Activated CD4-positive, alpha-beta memory T cell treated with anti-CD3 and anti-CD28 coated beads for 36 hours (primary cell): ENCODE measurements at regions of chr10 and their contacts with region 1.

Region 1: GRCh38 chr10:80372675-80373074 is 16.1 kb downstream of the DYDC2 start:
- DNase-seq: no peak
- H3K4me3 Mint-ChIP-seq: no peak overlapping the region
- H3K27ac Mint-ChIP-seq: no peak overlapping the region
- H3K4me1 Mint-ChIP-seq: no peaks in the 10 kb centered on the region
- H3K27me3 Mint-ChIP-seq: peaks cover 2% of the 10 kb centered on the region

Region 2: DNA sequence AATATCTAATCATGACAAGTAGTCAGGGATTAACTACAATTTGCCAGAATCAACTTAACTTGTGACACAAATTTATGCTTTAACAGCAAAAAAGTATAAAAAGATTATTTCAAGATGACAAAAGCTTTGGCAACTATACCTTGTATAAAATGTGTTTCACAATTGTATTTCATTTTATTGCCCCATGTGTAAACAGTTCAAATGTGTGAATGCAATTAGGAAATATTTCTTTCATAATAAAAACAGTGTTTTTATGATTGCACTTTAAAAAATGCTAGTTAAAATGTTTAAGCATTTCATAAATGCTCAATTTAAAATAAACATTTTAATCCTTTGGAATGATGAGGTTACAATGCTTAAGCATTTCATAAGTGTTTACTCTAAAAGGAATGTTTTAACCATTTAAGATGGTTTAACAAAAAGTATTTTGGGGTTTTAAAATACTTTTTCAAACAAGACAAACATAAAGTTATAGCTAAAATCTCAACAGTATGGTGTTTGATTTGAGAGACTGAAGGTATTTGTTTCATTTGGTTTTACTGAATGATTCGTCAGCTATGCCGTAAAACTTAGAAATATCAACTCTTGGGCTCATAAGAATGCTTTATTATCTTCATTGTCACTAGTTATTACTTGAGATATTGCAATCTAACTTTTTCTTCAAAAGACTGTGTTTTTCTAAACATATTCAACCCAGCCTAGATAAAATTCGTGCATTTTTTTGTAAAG is 473.9 kb before region 1 on chr10:
- CTCF ChIA-PET with region 1: no interaction called
- POLR2A ChIA-PET with region 1: no interaction called
- intact Hi-C with region 1: no loop called
- DNase-seq: no peak
- H3K4me3 Mint-ChIP-seq: no peak overlapping the region
- H3K27ac Mint-ChIP-seq: no peak overlapping the region
- H3K4me1 Mint-ChIP-seq: peaks cover under 1% of the 10 kb centered on the region
- H3K27me3 Mint-ChIP-seq: peaks cover 25% of the 10 kb centered on the region

Region 3: GRCh38 chr10:80158598-80159127 is 214.0 kb before region 1 on chr10:
- CTCF ChIA-PET with region 1: no interaction called
- POLR2A ChIA-PET with region 1: no interaction called
- intact Hi-C with region 1: no loop called
- DNase-seq: no peak
- H3K4me3 Mint-ChIP-seq: no peak overlapping the region
- H3K27ac Mint-ChIP-seq: peak overlapping the region; percentile 7
- H3K4me1 Mint-ChIP-seq: peaks cover 11% of the 10 kb centered on the region
- H3K27me3 Mint-ChIP-seq: no peaks in the 10 kb centered on the region

Region 4: GRCh38 chr10:80669485-80669884 is 296.8 kb after region 1 on chr10:
- CTCF ChIA-PET with region 1: no interaction called
- POLR2A ChIA-PET with region 1: no interaction called
- intact Hi-C with region 1: no loop called
- DNase-seq: no peak
- H3K4me3 Mint-ChIP-seq: no peak overlapping the region
- H3K27ac Mint-ChIP-seq: no peak overlapping the region
- H3K4me1 Mint-ChIP-seq: no peaks in the 10 kb centered on the region
- H3K27me3 Mint-ChIP-seq: no peaks in the 10 kb centered on the region

Region 5: GRCh38 chr10:81018708-81019365 is 646.2 kb after region 1 on chr10:
- CTCF ChIA-PET with region 1: no interaction called
- POLR2A ChIA-PET with region 1: no interaction called
- intact Hi-C with region 1: loop called (anchors 10 kb)
- DNase-seq: no peak
- H3K4me3 Mint-ChIP-seq: no peak overlapping the region
- H3K27ac Mint-ChIP-seq: no peak overlapping the region
- H3K4me1 Mint-ChIP-seq: peaks cover 4% of the 10 kb centered on the region
- H3K27me3 Mint-ChIP-seq: peaks cover 3% of the 10 kb centered on the region